CD4-positive, alpha-beta T cell (primary cell): ENCODE measurements at regions of chr18 and their contacts with region 1.

Region 1: DNA sequence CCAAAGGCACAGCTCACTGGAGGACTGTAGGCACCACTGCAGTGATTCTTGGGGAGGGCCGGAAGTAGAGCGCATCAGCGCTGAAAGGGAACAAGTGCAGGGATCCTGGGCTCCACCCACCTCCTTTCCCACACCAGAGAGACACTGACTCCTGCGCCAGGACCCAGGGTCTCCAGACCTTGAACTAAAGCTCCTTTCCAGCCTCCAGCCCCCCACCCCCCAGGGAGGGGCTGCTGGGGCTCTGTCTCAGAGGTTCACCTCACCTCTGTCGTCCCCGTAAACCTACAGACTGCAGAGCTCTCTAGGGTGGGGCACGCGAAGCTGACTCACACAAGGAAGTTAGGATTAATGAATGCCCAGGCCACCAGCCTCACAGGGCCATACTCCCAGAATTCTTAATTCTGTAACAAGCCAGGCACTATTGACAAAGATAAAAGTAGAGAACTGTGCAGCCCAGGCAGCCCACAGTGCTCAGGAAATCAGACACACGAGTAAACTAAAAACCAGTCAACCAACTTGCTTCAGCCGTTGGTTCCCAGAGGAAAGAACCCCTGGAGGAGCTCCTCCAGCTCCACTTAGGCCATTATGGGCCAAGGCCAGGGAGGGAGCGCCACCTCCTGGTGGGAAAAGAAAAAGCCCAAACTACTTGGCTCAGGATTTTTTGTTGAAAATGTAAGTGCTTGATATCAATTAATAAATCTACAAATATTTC is 45.1 kb upstream of the ACAA2 start:
- DNase-seq: peak; percentile 24 to 74 (median 48)
- ATAC-seq: no peak
- H3K4me3 ChIP-seq: no peak overlapping the region
- H3K4me3 Mint-ChIP-seq: no peak overlapping the region
- H3K27ac ChIP-seq: no peak overlapping the region
- H3K27ac Mint-ChIP-seq: no peak overlapping the region
- H3K4me1 ChIP-seq: peaks cover 9% of the 10 kb centered on the region
- H3K4me1 Mint-ChIP-seq: no peaks in the 10 kb centered on the region
- H3K27me3 ChIP-seq: no peaks in the 10 kb centered on the region
- H3K27me3 Mint-ChIP-seq: no peaks in the 10 kb centered on the region
- CTCF ChIP-seq: peak; percentile 85

Region 2: DNA sequence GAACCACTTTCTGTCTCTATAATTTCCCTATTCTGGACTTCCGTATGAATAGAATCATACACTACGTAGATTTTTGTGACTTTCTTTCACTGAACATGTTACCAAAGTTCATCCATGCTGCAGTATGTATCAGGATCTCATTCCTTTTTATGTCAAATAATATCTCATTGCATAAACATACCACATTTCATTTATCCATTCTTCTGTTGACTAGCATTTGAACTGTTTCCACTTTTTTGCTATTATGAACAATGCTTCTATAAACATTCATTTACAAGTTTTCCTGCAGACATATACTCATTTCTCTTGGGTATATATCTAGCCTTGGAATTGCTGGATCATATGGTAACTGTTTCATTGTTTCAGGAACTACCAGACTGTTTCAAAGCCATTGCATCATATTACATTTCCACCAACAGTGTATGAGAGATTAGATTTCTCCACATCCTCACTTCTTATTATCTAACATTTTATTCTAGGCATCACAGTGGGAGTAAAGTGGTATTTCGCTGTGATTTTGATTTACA is 584.2 kb before region 1 on chr18:
- CTCF ChIA-PET with region 1: no interaction called
- POLR2A ChIA-PET with region 1: no interaction called
- intact Hi-C with region 1: loop called in 1 of 2 experiments (anchors 10 kb)
- DNase-seq: no peak
- ATAC-seq: no peak
- H3K4me3 ChIP-seq: no peak overlapping the region
- H3K4me3 Mint-ChIP-seq: no peak overlapping the region
- H3K27ac ChIP-seq: no peak overlapping the region
- H3K27ac Mint-ChIP-seq: no peak overlapping the region
- H3K4me1 ChIP-seq: no peaks in the 10 kb centered on the region
- H3K4me1 Mint-ChIP-seq: no peaks in the 10 kb centered on the region
- H3K27me3 ChIP-seq: no peaks in the 10 kb centered on the region
- H3K27me3 Mint-ChIP-seq: no peaks in the 10 kb centered on the region
- CTCF ChIP-seq: no peak

Region 3: GRCh38 chr18:49561289-49562193 is 296.9 kb before region 1 on chr18 and contains the start of gene LIPG:
- CTCF ChIA-PET with region 1: interaction called, 6 read pairs
- POLR2A ChIA-PET with region 1: no interaction called
- intact Hi-C with region 1: loop called (anchors 1 kb)
- DNase-seq: peak in 7 of 14 experiments; percentile 1 to 64 (median 8)
- ATAC-seq: peak; percentile 73
- H3K4me3 ChIP-seq: peak within 1 kb of the TSS; percentile 41
- H3K4me3 Mint-ChIP-seq: peak within 1 kb of the TSS; percentile 79
- H3K27ac ChIP-seq: no peak within 1 kb of the TSS
- H3K27ac Mint-ChIP-seq: no peak within 1 kb of the TSS
- H3K4me1 ChIP-seq: peaks cover 25% of the 10 kb centered on the region
- H3K4me1 Mint-ChIP-seq: peaks cover 31% of the 10 kb centered on the region
- H3K27me3 ChIP-seq: peaks cover 54 to 70% of the 10 kb centered on the region in 2 experiments
- H3K27me3 Mint-ChIP-seq: peaks cover 79% of the 10 kb centered on the region
- CTCF ChIP-seq: no peak
- total RNA-seq, gene LIPG: not detected

Region 4: GRCh38 chr18:49876536-49876935 is 18.1 kb after region 1 on chr18:
- CTCF ChIA-PET with region 1: no interaction called
- POLR2A ChIA-PET with region 1: no interaction called
- intact Hi-C with region 1: no loop called
- DNase-seq: no peak
- ATAC-seq: no peak
- H3K4me3 ChIP-seq: no peak overlapping the region
- H3K4me3 Mint-ChIP-seq: no peak overlapping the region
- H3K27ac ChIP-seq: no peak overlapping the region
- H3K27ac Mint-ChIP-seq: no peak overlapping the region
- H3K4me1 ChIP-seq: no peaks in the 10 kb centered on the region
- H3K4me1 Mint-ChIP-seq: no peaks in the 10 kb centered on the region
- H3K27me3 ChIP-seq: peaks cover 0 to 2% of the 10 kb centered on the region in 2 experiments
- H3K27me3 Mint-ChIP-seq: peaks cover 26% of the 10 kb centered on the region
- CTCF ChIP-seq: no peak